Spleen (tissue), 13 donors: ENCODE measurements at regions of chr1 and their contacts with region 1.

Region 1: DNA sequence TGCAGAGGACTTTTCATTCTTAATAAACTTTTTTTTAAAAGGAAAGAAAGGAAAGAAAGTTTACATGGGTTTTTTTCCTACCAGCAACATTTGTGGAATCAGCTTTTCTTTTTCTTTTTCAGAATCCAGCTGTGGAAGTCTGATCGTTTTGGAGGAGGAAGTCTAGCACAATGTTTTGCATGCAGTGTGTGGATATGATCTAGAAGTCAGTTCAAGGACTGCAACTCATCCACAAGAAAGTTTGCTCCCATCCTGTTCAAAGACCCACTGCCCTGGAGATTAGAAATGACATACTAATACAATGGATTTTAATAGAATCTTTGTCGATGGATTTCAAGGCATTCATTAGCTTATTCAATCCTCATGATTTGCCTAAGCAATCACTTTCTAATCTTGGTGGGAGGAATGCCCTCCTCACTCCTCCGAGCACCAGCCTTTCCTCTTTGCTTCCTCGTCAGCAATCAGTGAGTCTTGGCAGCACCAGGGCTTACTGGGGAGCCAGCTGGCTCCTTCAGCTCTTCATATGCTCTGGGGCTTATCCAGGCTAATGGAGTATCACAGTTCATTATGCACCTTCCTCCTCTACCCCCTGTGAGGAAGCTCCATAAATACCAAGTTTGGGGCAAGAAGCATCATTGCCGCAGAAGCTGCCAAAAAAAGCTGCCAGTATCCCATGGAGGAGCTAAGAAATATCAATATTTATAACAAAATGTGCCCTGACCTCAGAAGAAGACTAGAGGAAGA is 392.3 kb upstream of the PKN2 start:
- DNase-seq: no peak
- H3K4me3 ChIP-seq: no peak overlapping the region
- H3K27ac ChIP-seq: no peak overlapping the region
- H3K4me1 ChIP-seq: no peaks in the 10 kb centered on the region
- H3K27me3 ChIP-seq: peaks cover 0 to 4% (median 0%) of the 10 kb centered on the region in 7 donors
- CTCF ChIP-seq: no peak
- POLR2A ChIP-seq: no peak

Region 2: DNA sequence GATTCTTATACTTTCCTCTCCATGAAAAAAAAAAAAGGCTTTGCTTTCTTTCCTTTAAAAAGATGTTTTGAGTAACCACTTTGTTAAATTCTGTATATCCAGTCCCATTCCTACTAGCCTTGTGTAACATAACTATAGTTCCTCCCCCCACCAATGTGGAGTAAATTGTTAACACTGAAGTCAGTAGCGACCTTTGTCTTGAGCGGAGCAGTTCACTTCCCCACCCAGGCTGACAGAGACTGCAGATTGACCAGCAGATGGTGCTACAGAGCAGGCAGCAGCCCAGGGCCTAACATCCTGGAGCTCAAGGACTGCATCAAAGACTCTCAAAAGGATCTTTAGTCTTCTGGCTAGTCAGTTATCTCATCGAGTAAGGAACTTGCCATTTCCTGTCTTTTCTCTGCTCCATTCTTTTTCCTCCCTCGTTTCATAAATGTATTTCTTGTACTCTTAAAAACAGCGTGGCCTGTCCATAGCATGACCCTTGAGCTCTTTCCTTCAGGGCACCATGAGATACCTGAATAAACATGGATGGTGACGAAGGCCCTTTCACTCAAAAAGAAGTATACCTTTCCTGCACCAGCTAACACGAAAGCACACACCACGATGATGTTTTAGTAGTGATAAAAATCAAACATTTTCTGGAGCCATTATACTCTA is 111.2 kb before region 1 on chr1:
- intact Hi-C with region 1: loop called (anchors 10 kb)
- DNase-seq: peak; percentile 86
- H3K4me3 ChIP-seq: no peak overlapping the region
- H3K27ac ChIP-seq: no peak overlapping the region
- H3K4me1 ChIP-seq: no peaks in the 10 kb centered on the region
- H3K27me3 ChIP-seq: no peaks in the 10 kb centered on the region
- CTCF ChIP-seq: peak; percentile 55 to 88 (median 82)
- POLR2A ChIP-seq: no peak

Region 3: DNA sequence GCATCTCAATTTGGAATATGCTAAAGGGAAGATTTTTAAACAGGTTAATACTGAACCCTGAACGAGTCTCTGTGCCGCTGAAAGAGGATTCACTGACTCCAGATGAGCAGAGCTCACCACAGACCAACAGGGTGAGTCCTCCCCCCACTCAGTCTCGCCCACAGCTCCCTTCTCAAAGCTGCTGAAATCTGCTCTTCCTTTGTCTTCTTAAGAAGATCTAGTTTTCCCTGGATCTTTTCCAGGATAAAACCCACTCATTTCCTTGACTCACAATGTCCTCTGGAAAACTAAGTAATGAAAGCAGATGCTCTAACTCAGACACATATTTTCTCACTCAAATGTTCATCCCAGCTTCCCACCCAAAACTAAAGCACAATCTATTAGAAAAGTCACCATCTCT is 54.7 kb before region 1 on chr1:
- intact Hi-C with region 1: no loop called
- DNase-seq: no peak
- H3K4me3 ChIP-seq: no peak overlapping the region
- H3K27ac ChIP-seq: no peak overlapping the region
- H3K4me1 ChIP-seq: no peaks in the 10 kb centered on the region
- H3K27me3 ChIP-seq: no peaks in the 10 kb centered on the region
- CTCF ChIP-seq: no peak
- POLR2A ChIP-seq: no peak